B cell (primary cell): ENCODE measurements at regions of chr7 and their contacts with region 1.

Region 1: DNA sequence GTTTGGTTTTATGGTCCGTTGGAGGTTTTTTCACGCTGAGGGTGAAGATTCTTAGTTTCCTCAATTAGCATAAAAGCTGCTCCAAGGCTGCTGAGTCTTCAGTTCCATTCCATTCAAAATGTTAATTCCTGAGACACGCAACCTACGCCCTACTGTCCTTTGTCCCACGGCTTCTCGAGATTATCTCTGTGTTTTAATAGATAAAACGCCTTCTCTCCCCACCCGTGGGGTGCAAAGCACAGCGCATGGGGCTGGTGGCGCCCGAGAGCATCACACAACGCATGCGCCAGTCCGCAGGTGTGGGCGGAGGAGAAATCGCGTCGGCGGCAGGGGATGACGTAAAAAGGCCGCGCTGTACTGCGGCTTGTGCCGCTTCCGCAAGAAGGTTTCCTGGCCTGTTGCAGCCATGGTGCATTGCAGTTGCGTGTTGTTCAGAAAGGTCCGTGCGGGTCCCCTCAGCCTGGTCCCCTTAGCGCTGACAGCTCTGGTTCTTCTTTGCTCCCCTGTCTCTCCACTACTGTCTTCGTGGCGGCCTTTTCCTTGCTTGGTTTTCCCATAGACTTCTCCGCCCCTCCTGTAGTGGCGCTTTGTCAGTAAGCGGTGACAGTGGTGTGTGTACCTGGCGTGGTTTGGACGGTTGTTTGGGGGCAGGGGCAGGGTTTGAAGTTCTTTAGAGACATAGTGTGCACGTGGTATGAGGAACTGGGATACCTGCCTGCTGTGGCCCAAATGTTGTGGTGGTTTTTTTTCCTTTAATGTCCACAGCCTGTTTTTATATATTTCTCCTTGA is at the start of gene GTPBP10:
- DNase-seq: peak; percentile 98
- ATAC-seq: peak; percentile 94
- H3K4me3 ChIP-seq: peak within 1 kb of the TSS; percentile 67 to 93 (median 86)
- H3K4me3 Mint-ChIP-seq: peak within 1 kb of the TSS; percentile 99
- H3K27ac ChIP-seq: peak within 1 kb of the TSS; percentile 95 to 96
- H3K27ac Mint-ChIP-seq: peak within 1 kb of the TSS; percentile 99
- H3K4me1 ChIP-seq: peaks cover 14 to 17% of the 10 kb centered on the region in 2 donors
- H3K4me1 Mint-ChIP-seq: peaks cover 49% of the 10 kb centered on the region
- H3K27me3 ChIP-seq: no peaks in the 10 kb centered on the region
- H3K27me3 Mint-ChIP-seq: no peaks in the 10 kb centered on the region
- CTCF ChIP-seq: peak; percentile 76
- total RNA-seq, gene GTPBP10: 36.2 and 39.5 TPM in 2 replicates

Region 2: GRCh38 chr7:90244909-90245851 is 101.4 kb before region 1 on chr7 and contains the start of gene CFAP69:
- CTCF ChIA-PET with region 1: no interaction called
- POLR2A ChIA-PET with region 1: no interaction called
- intact Hi-C with region 1: loop called (anchors 1 kb)
- DNase-seq: peak; percentile 88
- ATAC-seq: peak; percentile 90
- H3K4me3 ChIP-seq: peak within 1 kb of the TSS; percentile 30 to 86 (median 69)
- H3K4me3 Mint-ChIP-seq: peak within 1 kb of the TSS; percentile 91
- H3K27ac ChIP-seq: peak within 1 kb of the TSS in 1 of 2 donors; percentile 37
- H3K27ac Mint-ChIP-seq: peak within 1 kb of the TSS; percentile 2
- H3K4me1 ChIP-seq: peaks cover 16 to 20% of the 10 kb centered on the region in 2 donors
- H3K4me1 Mint-ChIP-seq: peaks cover 28% of the 10 kb centered on the region
- H3K27me3 ChIP-seq: peaks cover 0 to 31% (median 26%) of the 10 kb centered on the region in 4 experiments
- H3K27me3 Mint-ChIP-seq: peaks cover 45% of the 10 kb centered on the region
- CTCF ChIP-seq: no peak
- total RNA-seq, gene CFAP69: 0.15 and 0.29 TPM in 2 replicates

Region 3: DNA sequence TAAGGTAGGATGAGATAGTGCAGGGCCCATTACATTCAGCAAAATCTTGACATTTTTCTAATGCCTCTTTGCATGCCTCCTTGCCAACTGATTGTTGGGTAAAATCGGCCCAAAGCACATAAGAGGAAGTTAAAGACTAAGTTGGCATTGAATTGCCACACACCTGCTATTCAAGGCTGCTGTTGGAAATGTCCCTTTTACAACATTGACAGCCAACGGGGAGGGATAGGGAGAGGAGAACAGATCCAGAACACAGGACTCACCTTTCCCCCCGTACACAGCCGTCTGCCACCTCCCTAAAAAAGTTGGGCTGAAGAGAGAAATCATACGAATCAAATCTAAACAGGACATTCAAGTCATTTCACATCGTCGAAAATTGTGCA is 26.1 kb before region 1 on chr7:
- CTCF ChIA-PET with region 1: no interaction called
- POLR2A ChIA-PET with region 1: no interaction called
- intact Hi-C with region 1: no loop called
- DNase-seq: no peak
- ATAC-seq: no peak
- H3K4me3 ChIP-seq: no peak overlapping the region
- H3K4me3 Mint-ChIP-seq: peak overlapping the region; percentile 17
- H3K27ac ChIP-seq: no peak overlapping the region
- H3K27ac Mint-ChIP-seq: no peak overlapping the region
- H3K4me1 ChIP-seq: peaks cover 0 to 13% of the 10 kb centered on the region in 2 donors
- H3K4me1 Mint-ChIP-seq: peaks cover 8% of the 10 kb centered on the region
- H3K27me3 ChIP-seq: peaks cover 0 to 29% (median 26%) of the 10 kb centered on the region in 4 experiments
- H3K27me3 Mint-ChIP-seq: peaks cover 54% of the 10 kb centered on the region
- CTCF ChIP-seq: no peak

Region 4: DNA sequence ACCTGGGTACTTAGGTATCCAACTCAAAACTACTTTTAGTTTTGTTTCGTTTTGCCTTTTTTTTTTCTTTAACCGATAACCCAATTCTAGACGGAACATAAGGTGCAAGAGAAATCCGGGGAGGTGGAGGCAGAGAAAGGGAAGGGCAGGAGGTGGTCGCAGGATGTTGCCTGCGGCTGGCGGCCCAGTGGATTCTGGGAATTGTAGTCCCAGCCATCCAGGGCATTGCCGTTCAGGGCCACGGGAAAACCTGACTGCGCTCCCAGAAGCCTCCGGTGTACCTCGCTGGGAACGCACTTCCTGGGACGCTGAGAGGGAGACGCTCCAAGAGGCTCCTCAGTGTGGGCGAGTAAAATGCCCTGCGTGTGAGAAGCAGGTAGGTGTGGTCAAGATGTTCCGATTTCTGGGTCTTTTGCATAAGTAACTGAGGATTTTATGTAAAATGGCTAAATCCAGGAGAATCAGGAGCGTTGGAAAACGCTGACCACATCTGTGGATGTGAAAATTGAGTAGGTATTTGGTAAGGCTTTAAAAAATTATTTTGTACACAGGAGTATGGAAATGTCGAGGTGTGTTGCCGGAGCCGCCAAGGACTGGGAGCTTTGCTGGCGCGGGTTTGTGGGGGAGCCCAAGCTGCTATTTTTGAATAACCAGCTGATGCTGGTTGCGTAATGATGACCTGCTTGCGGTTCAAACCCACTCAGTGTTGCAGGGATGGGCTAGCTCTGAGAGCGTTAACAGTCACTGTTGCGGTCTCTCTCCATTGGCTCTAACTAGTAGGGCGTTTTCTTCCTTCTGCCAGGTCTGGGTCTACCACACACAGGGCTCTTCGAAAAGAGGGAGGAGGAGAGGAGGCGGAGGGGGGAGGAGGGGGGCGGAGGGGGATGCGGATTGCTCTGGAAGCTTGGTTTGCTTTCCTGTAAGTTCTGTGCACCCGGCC is 56.9 kb after region 1 on chr7 and contains the start of gene CLDN12:
- CTCF ChIA-PET with region 1: interaction called, 11 read pairs
- POLR2A ChIA-PET with region 1: interaction called, 8 read pairs
- intact Hi-C with region 1: loop called (anchors 1 kb)
- DNase-seq: peak; percentile 90
- ATAC-seq: peak; percentile 96
- H3K4me3 ChIP-seq: peak within 1 kb of the TSS; percentile 65 to 98 (median 81)
- H3K4me3 Mint-ChIP-seq: peak within 1 kb of the TSS; percentile 99
- H3K27ac ChIP-seq: peak within 1 kb of the TSS; percentile 47 to 72
- H3K27ac Mint-ChIP-seq: peak within 1 kb of the TSS; percentile 98
- H3K4me1 ChIP-seq: peaks cover 5% of the 10 kb centered on the region in 2 donors
- H3K4me1 Mint-ChIP-seq: peaks cover 20% of the 10 kb centered on the region
- H3K27me3 ChIP-seq: no peaks in the 10 kb centered on the region
- H3K27me3 Mint-ChIP-seq: no peaks in the 10 kb centered on the region
- CTCF ChIP-seq: no peak
- total RNA-seq, gene CLDN12: 14.1 and 17.3 TPM in 2 replicates

Region 5: GRCh38 chr7:90726623-90727022 is 380.1 kb after region 1 on chr7:
- CTCF ChIA-PET with region 1: no interaction called
- POLR2A ChIA-PET with region 1: no interaction called
- intact Hi-C with region 1: loop called (anchors 5 kb)
- DNase-seq: no peak
- ATAC-seq: no peak
- H3K4me3 ChIP-seq: peak overlapping the region in 4 of 5 experiments; percentile 9 to 59 (median 23)
- H3K4me3 Mint-ChIP-seq: peak overlapping the region; percentile 79
- H3K27ac ChIP-seq: peak overlapping the region; percentile 30 to 84
- H3K27ac Mint-ChIP-seq: peak overlapping the region; percentile 81
- H3K4me1 ChIP-seq: peaks cover 45 to 70% of the 10 kb centered on the region in 2 donors
- H3K4me1 Mint-ChIP-seq: peaks cover 81% of the 10 kb centered on the region
- H3K27me3 ChIP-seq: no peaks in the 10 kb centered on the region
- H3K27me3 Mint-ChIP-seq: no peaks in the 10 kb centered on the region
- CTCF ChIP-seq: no peak